CD8-positive, alpha-beta T cell (primary cell): ENCODE measurements at regions of chr14 and their contacts with region 1.

Region 1: GRCh38 chr14:72926292-72927028 is at the start of gene DCAF4:
- DNase-seq: peak; percentile 89 to 97 (median 93)
- ATAC-seq: peak; percentile 93
- H3K4me3 ChIP-seq: peak within 1 kb of the TSS; percentile 79 to 87
- H3K4me3 Mint-ChIP-seq: peak within 1 kb of the TSS; percentile 94
- H3K27ac ChIP-seq: peak within 1 kb of the TSS; percentile 67 to 76
- H3K27ac Mint-ChIP-seq: peak within 1 kb of the TSS; percentile 92
- H3K4me1 ChIP-seq: peaks cover 13% of the 10 kb centered on the region
- H3K4me1 Mint-ChIP-seq: peaks cover 15% of the 10 kb centered on the region
- H3K27me3 ChIP-seq: no peaks in the 10 kb centered on the region
- H3K27me3 Mint-ChIP-seq: peaks cover 2% of the 10 kb centered on the region
- CTCF ChIP-seq: no peak
- total RNA-seq, gene DCAF4: 21.9 to 26.6 TPM

Region 2: DNA sequence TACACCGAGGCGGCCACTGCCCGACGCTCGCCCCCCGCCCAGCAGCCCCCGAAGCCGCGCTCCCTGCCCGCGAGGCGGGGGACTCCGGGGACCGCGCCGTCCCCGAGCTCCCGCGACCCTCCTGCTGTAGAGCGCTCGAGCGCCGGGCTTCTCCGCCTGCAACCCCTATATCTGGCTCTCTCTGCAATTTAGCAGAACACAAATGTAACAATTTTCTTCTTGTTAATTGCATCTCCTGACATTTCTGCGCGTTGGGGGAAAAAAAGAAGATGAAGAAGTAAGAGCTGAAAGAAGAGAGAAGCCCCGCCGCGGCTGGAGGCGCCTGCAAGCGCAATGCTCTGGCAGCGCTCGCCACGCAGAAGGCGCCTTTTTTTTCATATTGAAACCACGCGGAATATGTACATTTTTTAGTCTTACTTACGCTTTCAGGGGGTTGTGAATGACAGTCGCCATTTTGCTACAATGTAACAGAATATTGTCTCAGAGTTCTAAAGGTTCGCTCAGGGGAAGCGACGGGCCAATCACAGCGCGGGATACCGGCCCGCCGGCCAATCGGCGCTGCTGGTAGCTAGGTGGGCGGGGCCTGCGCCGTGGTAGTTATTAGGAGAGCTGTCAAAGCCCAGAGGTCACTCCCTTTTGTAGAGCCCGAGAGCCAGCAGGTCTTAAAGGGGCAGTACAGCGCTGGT is 32.7 kb before region 1 on chr14 and contains the start of gene DPF3:
- CTCF ChIA-PET with region 1: no interaction called
- POLR2A ChIA-PET with region 1: no interaction called
- intact Hi-C with region 1: loop called (anchors 1 kb)
- DNase-seq: peak; percentile 84 to 94 (median 92)
- ATAC-seq: peak; percentile 95
- H3K4me3 ChIP-seq: peak within 1 kb of the TSS; percentile 74 to 84
- H3K4me3 Mint-ChIP-seq: peak within 1 kb of the TSS; percentile 97
- H3K27ac ChIP-seq: peak within 1 kb of the TSS in 1 of 2 experiments; percentile 26
- H3K27ac Mint-ChIP-seq: peak within 1 kb of the TSS; percentile 2
- H3K4me1 ChIP-seq: peaks cover 21% of the 10 kb centered on the region
- H3K4me1 Mint-ChIP-seq: peaks cover 30% of the 10 kb centered on the region
- H3K27me3 ChIP-seq: peaks cover 8 to 27% of the 10 kb centered on the region in 2 experiments
- H3K27me3 Mint-ChIP-seq: peaks cover 49% of the 10 kb centered on the region
- CTCF ChIP-seq: no peak
- total RNA-seq, gene DPF3: 0.28 to 0.65 TPM

Region 3: DNA sequence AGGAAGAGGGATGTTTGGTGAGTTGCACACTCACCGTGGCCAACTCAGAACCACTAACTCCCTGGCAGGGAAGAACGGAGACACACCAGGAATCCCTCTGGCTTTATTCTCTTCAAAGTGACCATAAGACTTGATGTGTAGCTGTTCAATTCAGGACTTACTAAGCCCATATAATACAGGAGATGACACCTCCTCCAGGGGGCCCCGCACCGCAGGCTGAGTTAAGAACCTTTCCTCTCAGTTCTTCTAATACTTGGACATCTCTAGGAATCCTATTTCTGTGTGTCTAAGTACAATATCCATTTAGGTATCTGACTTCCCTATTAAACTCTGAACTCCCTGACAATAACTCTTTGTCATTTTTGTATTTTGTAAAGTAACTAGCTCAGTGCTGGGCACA is 49.3 kb after region 1 on chr14:
- CTCF ChIA-PET with region 1: no interaction called
- POLR2A ChIA-PET with region 1: no interaction called
- intact Hi-C with region 1: no loop called
- DNase-seq: no peak
- ATAC-seq: no peak
- H3K4me3 ChIP-seq: no peak overlapping the region
- H3K4me3 Mint-ChIP-seq: no peak overlapping the region
- H3K27ac ChIP-seq: no peak overlapping the region
- H3K27ac Mint-ChIP-seq: no peak overlapping the region
- H3K4me1 ChIP-seq: no peaks in the 10 kb centered on the region
- H3K4me1 Mint-ChIP-seq: no peaks in the 10 kb centered on the region
- H3K27me3 ChIP-seq: no peaks in the 10 kb centered on the region
- H3K27me3 Mint-ChIP-seq: no peaks in the 10 kb centered on the region
- CTCF ChIP-seq: no peak

Region 4: GRCh38 chr14:73223049-73223448 is 296.6 kb after region 1 on chr14:
- CTCF ChIA-PET with region 1: no interaction called
- POLR2A ChIA-PET with region 1: no interaction called
- intact Hi-C with region 1: no loop called
- DNase-seq: no peak
- ATAC-seq: no peak
- H3K4me3 ChIP-seq: no peak overlapping the region
- H3K4me3 Mint-ChIP-seq: no peak overlapping the region
- H3K27ac ChIP-seq: no peak overlapping the region
- H3K27ac Mint-ChIP-seq: peak overlapping the region; percentile 35
- H3K4me1 ChIP-seq: no peaks in the 10 kb centered on the region
- H3K4me1 Mint-ChIP-seq: no peaks in the 10 kb centered on the region
- H3K27me3 ChIP-seq: no peaks in the 10 kb centered on the region
- H3K27me3 Mint-ChIP-seq: no peaks in the 10 kb centered on the region
- CTCF ChIP-seq: no peak